Naive thymus-derived CD4-positive, alpha-beta T cell (primary cell): ENCODE measurements at regions of chr19 and their contacts with region 1.

Region 1: DNA sequence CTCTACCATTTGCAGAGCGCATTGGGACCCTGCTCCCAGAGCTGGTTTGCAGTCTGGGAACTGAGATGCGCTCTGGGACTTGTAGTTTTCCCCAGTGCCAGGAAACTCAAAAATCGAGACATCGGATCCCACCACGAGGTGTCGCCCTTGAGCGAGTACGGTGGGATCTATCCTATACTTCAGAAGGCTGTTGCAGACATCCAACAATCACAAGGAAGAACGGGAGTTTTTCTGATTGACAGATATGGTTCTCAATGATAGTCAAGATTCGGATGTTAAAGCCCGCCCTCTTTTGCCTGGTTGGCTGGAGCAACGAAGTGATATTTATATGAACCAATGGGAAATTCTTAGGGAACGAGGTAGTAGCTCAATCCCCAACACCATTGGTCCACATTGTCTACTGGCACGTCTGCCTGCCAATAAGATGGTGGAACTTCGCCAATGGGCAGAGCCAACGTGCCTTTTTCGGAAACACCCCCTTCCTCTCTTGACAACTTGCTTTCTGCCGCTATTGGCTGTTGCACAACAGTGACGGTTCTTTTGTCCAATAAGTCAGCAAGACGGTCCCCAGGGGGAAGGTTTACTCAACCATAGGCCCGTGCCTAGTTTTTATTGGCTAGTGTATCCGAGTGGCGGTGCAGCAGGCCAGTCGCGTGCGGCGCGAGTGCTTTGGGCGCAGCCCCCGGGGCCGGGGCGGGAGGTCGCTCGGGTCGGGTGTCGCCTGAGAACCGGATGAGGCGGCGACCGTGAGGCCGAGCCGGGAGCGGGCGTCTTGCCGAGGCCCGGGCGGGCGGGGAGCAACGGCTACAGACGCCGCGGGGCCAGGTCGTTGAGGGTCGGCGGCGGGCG is at the start of gene DNM2:
- DNase-seq: peak; percentile 90 to 100 (median 99)
- ATAC-seq: peak; percentile 90
- H3K4me3 ChIP-seq: peak within 1 kb of the TSS; percentile 77
- H3K4me3 Mint-ChIP-seq: peak within 1 kb of the TSS; percentile 91 to 98 (median 96)
- H3K27ac ChIP-seq: peak within 1 kb of the TSS; percentile 87
- H3K27ac Mint-ChIP-seq: peak within 1 kb of the TSS; percentile 85 to 96 (median 93)
- H3K4me1 ChIP-seq: peaks cover 23 to 34% of the 10 kb centered on the region in 2 donors
- H3K4me1 Mint-ChIP-seq: peaks cover 19 to 48% (median 35%) of the 10 kb centered on the region in 7 donors
- H3K27me3 ChIP-seq: no peaks in the 10 kb centered on the region
- H3K27me3 Mint-ChIP-seq: no peaks in the 10 kb centered on the region
- total RNA-seq, gene DNM2: 238 to 340 (median 269) TPM

Region 2: DNA sequence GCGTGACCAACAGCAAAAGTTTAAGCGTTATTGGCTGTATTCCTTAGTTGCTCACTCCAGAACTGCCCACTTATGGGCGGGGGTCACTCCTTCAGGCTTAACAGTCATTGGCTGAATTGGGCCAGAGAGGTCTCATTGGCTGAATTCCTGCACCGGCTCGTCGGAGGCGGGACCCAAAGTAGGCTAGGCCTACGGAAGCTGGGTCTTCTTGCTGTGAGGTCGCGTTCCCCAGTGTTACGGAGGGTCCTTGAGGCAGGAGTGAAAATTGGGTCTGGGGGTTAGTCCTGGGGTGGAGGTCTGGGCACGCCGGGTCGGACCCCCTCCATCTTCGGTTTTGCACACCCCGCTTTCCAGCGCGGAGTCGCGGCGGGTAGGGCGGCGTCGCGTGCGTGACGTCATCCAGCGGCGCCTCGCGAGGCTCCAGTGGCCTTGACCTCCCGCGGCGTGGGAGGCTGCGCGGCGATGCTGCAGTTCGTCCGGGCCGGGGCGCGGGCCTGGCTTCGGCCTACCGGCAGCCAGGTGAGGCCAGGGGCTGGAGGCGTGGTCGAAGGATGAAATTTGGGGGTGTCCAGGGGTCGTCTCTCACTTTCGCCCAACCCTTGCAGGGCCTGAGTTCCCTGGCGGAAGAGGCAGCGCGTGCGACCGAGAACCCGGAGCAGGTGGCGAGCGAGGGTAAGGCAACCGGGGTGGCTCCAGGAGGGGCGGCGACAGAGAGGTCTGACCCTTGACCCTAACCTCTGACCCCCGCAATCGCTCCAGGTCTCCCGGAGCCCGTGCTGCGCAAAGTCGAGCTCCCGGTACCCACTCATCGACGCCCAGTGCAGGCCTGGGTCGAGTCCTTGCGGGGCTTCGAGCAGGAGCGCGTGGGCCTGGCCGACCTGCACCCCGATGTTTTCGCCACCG is 465.5 kb before region 1 on chr19 and contains the start of gene MRPL4:
- CTCF ChIA-PET with region 1: no interaction called
- POLR2A ChIA-PET with region 1: no interaction called
- intact Hi-C with region 1: loop called in 1 of 2 experiments (anchors 5 kb)
- DNase-seq: peak; percentile 82 to 98 (median 96)
- ATAC-seq: peak; percentile 98
- H3K4me3 ChIP-seq: peak within 1 kb of the TSS; percentile 90
- H3K4me3 Mint-ChIP-seq: peak within 1 kb of the TSS; percentile 93 to 100 (median 98)
- H3K27ac ChIP-seq: peak within 1 kb of the TSS; percentile 78
- H3K27ac Mint-ChIP-seq: peak within 1 kb of the TSS; percentile 92 to 99 (median 97)
- H3K4me1 ChIP-seq: peaks cover 6 to 12% of the 10 kb centered on the region in 2 donors
- H3K4me1 Mint-ChIP-seq: peaks cover 6 to 33% (median 24%) of the 10 kb centered on the region in 7 donors
- H3K27me3 ChIP-seq: no peaks in the 10 kb centered on the region
- H3K27me3 Mint-ChIP-seq: no peaks in the 10 kb centered on the region
- total RNA-seq, gene MRPL4: 36.8 to 70.5 (median 43.0) TPM

Region 3: DNA sequence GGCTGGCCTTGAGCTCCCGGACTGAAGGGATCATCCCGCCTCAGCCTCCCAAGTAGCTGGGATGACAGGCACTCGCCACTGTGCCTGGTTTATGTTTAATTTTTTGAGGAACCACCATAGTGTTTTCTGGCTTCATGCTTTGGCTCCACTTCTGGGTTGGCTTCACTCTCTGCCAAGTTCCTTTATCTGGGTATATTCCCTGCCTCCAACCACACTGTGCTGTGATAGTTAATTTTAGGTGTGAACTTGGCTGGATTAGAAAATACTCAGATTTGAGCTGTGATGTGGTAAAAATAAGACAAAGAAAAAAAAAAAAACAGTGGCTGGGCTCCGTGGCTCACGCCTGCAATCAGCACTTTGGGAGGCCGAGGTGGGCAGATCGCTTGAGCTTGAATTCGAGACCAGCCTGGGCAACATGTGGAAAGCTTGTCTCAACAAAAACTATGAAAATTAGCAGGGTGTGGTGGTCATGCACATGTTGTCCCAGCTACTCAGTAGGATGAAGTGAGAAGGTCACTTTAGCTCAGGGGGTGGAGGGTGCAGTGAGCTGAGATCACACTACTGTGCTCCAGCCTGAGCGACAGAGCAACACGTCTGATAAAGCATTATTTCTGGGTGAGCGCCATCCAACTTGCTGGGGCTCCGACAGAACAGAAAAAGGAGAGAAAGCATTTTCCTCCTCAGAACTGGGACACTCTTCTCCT is 71.0 kb before region 1 on chr19:
- CTCF ChIA-PET with region 1: no interaction called
- POLR2A ChIA-PET with region 1: no interaction called
- intact Hi-C with region 1: no loop called
- DNase-seq: no peak
- ATAC-seq: no peak
- H3K4me3 ChIP-seq: no peak overlapping the region
- H3K4me3 Mint-ChIP-seq: no peak overlapping the region
- H3K27ac ChIP-seq: no peak overlapping the region
- H3K27ac Mint-ChIP-seq: peak overlapping the region in 2 of 9 donors; percentile 9 to 41
- H3K4me1 ChIP-seq: peaks cover under 1 to 8% of the 10 kb centered on the region in 2 donors
- H3K4me1 Mint-ChIP-seq: peaks cover 10 to 33% (median 23%) of the 10 kb centered on the region in 7 donors
- H3K27me3 ChIP-seq: no peaks in the 10 kb centered on the region
- H3K27me3 Mint-ChIP-seq: peaks cover 0 to 2% (median 0%) of the 10 kb centered on the region in 5 donors

Region 4: DNA sequence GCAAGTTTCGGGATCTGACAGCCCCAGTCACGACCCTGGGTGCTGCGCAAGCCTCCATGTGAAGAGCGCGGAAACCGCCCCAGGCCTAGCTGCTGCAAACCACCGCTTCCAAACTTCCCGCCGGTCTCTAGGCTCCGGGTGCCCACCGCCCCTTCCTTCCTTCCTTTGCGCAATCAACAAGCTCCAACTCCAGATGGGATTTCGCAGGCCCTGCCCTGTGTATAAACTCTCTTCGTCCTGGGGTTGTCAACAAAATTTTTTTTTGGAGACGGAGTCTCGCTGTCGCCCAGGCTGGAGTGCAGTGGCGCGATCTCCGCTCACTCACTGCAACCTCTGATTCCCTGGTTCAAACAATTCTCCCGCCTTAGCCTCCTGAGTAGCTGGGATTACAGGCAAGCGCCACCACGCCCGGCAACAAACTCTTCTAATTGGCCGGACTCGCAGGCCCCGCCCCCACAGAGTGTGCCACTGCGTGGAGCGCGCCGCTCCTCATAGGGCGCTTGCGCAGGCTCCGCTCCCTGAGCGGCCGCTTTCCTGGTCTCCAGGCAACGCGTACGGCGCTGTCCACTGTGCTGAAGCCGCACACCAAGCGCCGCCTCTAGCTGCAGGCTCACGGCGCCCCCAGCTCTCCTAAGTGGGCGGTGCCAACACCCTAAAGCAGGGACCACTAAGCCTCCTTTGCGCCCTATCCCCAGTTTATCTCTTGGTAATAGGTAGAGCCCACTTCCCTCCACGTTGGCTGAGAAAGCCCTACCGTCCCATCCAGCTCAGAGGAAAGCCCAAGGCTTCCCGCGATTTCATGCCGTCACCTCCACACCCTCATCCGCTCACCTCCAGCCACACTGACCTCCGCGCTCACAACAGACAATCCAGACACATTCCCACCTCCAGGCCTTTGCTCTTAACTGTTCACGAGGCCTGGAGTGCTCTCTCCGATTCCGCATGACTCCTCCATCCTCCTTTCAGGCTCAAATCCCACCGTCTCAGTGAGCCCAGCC is 21.9 kb before region 1 on chr19:
- CTCF ChIA-PET with region 1: no interaction called
- POLR2A ChIA-PET with region 1: interaction called, 3 read pairs
- intact Hi-C with region 1: loop called in 1 of 2 experiments (anchors 2 kb)
- DNase-seq: peak; percentile 79 to 90 (median 85)
- ATAC-seq: peak; percentile 99
- H3K4me3 ChIP-seq: peak overlapping the region; percentile 36
- H3K4me3 Mint-ChIP-seq: peak overlapping the region; percentile 81 to 89 (median 86)
- H3K27ac ChIP-seq: no peak overlapping the region
- H3K27ac Mint-ChIP-seq: peak overlapping the region in 8 of 9 donors; percentile 9 to 88 (median 56)
- H3K4me1 ChIP-seq: peaks cover 4 to 10% of the 10 kb centered on the region in 2 donors
- H3K4me1 Mint-ChIP-seq: peaks cover 12 to 25% (median 21%) of the 10 kb centered on the region in 7 donors
- H3K27me3 ChIP-seq: no peaks in the 10 kb centered on the region
- H3K27me3 Mint-ChIP-seq: peaks cover 0 to 11% (median 0%) of the 10 kb centered on the region in 5 donors

Region 5: DNA sequence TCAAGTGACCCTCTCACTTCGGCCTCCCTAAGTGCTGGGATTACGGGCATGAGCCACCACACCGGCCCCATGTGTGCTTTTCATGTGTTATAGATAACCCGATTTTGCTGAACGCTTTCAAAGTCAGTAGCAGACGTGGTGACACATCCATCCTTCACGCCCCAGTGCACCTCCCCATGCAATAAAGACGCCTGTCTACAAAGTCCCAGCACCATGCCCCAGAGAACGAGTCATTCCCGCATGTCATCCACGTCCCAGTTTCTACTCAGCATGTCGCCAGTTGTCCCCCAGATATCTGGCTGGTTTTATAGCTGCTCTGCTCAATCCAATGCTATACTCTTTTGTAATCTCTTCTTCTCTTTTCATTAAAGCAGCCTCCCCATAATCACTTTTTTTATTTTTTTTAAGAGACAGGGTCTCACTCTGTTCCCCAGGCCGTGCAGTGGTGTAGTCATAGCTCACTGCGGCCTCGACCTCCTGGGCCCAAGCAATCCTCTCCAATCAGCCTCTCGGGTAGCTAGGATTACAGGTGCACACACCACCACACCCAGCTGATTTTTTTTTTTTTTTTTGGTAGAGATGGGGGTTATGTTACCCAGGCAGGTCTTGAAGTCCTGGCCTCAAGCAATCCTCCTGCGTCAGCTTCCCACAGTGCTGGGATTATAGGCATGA is 42.8 kb after region 1 on chr19:
- CTCF ChIA-PET with region 1: interaction called, 20 read pairs
- POLR2A ChIA-PET with region 1: interaction called, 22 read pairs
- intact Hi-C with region 1: loop called (anchors 1 kb)
- DNase-seq: peak in 1 of 9 donors; percentile 57
- ATAC-seq: no peak
- H3K4me3 ChIP-seq: no peak overlapping the region
- H3K4me3 Mint-ChIP-seq: peak overlapping the region; percentile 60 to 86 (median 82)
- H3K27ac ChIP-seq: peak overlapping the region; percentile 70
- H3K27ac Mint-ChIP-seq: peak overlapping the region; percentile 83 to 99 (median 94)
- H3K4me1 ChIP-seq: peaks cover 62 to 79% of the 10 kb centered on the region in 2 donors
- H3K4me1 Mint-ChIP-seq: peaks cover 69 to 92% (median 84%) of the 10 kb centered on the region in 7 donors
- H3K27me3 ChIP-seq: no peaks in the 10 kb centered on the region
- H3K27me3 Mint-ChIP-seq: peaks cover 0 to 2% (median 0%) of the 10 kb centered on the region in 5 donors

Region 6: DNA sequence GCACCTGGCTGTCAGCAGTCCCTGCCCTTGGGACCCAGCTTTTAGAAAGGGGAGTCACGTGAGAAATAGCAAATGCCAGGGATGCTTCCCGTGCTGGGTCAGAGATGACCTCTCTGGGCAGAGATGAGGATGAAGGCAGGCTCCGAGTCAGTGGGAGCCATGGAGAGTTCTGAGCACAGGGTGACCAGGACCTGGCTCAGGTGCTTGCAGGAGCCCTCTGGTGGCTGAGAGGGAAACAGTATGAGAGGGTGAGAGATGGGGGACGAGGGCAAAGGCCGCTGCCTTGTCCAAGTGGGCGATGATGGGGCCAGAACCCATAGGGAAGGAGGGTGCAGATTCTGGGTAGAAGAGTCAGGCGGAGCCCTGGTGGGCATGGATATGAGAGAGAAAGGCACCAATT is 102.6 kb after region 1 on chr19:
- CTCF ChIA-PET with region 1: interaction called, 8 read pairs
- POLR2A ChIA-PET with region 1: no interaction called
- intact Hi-C with region 1: loop called in 1 of 2 experiments (anchors 1 kb)
- DNase-seq: no peak
- ATAC-seq: no peak
- H3K4me3 ChIP-seq: no peak overlapping the region
- H3K4me3 Mint-ChIP-seq: no peak overlapping the region
- H3K27ac ChIP-seq: no peak overlapping the region
- H3K27ac Mint-ChIP-seq: peak overlapping the region in 7 of 9 donors; percentile 2 to 88 (median 71)
- H3K4me1 ChIP-seq: peaks cover 0 to 7% of the 10 kb centered on the region in 2 donors
- H3K4me1 Mint-ChIP-seq: peaks cover 0 to 9% (median 0%) of the 10 kb centered on the region in 7 donors
- H3K27me3 ChIP-seq: no peaks in the 10 kb centered on the region
- H3K27me3 Mint-ChIP-seq: no peaks in the 10 kb centered on the region

Region 7: GRCh38 chr19:10870955-10871603 is 153.5 kb after region 1 on chr19 and contains the start of gene CARM1:
- CTCF ChIA-PET with region 1: interaction called, 39 read pairs
- POLR2A ChIA-PET with region 1: interaction called, 6 read pairs
- intact Hi-C with region 1: loop called in 1 of 2 experiments (anchors 1 kb)
- DNase-seq: peak; percentile 99 to 100 (median 99)
- ATAC-seq: peak; percentile 92
- H3K4me3 ChIP-seq: peak within 1 kb of the TSS; percentile 67
- H3K4me3 Mint-ChIP-seq: peak within 1 kb of the TSS; percentile 79 to 91 (median 86)
- H3K27ac ChIP-seq: peak within 1 kb of the TSS; percentile 74
- H3K27ac Mint-ChIP-seq: peak within 1 kb of the TSS; percentile 74 to 96 (median 88)
- H3K4me1 ChIP-seq: peaks cover 10 to 14% of the 10 kb centered on the region in 2 donors
- H3K4me1 Mint-ChIP-seq: peaks cover 5 to 33% (median 25%) of the 10 kb centered on the region in 7 donors
- H3K27me3 ChIP-seq: no peaks in the 10 kb centered on the region
- H3K27me3 Mint-ChIP-seq: no peaks in the 10 kb centered on the region
- total RNA-seq, gene CARM1: 21.3 to 43.1 (median 27.2) TPM

Region 8: GRCh38 chr19:11155373-11156120 is 438.0 kb after region 1 on chr19 and contains the start of gene SPC24:
- CTCF ChIA-PET with region 1: no interaction called
- POLR2A ChIA-PET with region 1: no interaction called
- intact Hi-C with region 1: loop called in 1 of 2 experiments (anchors 1 kb)
- DNase-seq: peak; percentile 70 to 93 (median 90)
- ATAC-seq: peak; percentile 98
- H3K4me3 ChIP-seq: peak within 1 kb of the TSS; percentile 71
- H3K4me3 Mint-ChIP-seq: peak within 1 kb of the TSS; percentile 79 to 94 (median 89)
- H3K27ac ChIP-seq: peak within 1 kb of the TSS; percentile 16
- H3K27ac Mint-ChIP-seq: peak within 1 kb of the TSS; percentile 54 to 92 (median 83)
- H3K4me1 ChIP-seq: peaks cover 6 to 15% of the 10 kb centered on the region in 2 donors
- H3K4me1 Mint-ChIP-seq: peaks cover 7 to 30% (median 15%) of the 10 kb centered on the region in 7 donors
- H3K27me3 ChIP-seq: no peaks in the 10 kb centered on the region
- H3K27me3 Mint-ChIP-seq: no peaks in the 10 kb centered on the region
- total RNA-seq, gene SPC24: 0.56 to 45.4 (median 1.9) TPM